Cardiac septum (tissue), 1 donor: ENCODE measurements at regions of chr20 and their contacts with region 1.

Region 1: GRCh38 chr20:44394702-44395460 is 39.4 kb downstream of the HNF4A start:
- DNase-seq: no peak

Region 2: DNA sequence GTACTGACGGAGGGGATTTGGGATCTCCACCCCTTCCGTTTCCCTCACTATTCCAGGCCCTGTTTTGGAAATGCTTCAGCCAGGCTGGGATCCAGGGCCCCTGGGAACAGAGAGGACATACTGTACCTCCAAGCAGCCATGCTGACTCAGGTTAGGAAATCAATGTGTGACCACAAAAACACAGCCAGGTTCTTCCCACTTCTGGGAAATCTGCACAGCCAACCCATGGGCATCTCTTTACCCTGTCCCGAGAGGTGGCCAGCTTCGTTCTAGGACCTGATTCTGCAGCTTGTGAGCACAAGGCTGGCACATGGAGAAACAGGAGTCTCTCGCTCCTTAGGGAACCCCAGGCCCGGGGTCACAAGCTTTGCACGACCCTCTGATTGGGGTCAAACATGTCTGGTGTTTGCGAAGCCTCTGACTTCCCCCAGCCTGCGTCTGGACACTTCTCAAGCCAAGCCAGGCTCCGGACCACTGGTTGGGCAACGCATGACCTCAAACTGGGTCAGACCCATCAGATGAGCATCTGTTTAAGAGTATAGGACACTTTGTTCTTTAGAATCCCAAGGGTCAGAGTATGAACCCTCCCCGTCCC is 72.5 kb after region 1 on chr20:
- intact Hi-C with region 1: loop called (anchors 5 kb)
- DNase-seq: no peak